ENCODE measurements at regions of chr5 and their contacts with region 1.

Region 1: DNA sequence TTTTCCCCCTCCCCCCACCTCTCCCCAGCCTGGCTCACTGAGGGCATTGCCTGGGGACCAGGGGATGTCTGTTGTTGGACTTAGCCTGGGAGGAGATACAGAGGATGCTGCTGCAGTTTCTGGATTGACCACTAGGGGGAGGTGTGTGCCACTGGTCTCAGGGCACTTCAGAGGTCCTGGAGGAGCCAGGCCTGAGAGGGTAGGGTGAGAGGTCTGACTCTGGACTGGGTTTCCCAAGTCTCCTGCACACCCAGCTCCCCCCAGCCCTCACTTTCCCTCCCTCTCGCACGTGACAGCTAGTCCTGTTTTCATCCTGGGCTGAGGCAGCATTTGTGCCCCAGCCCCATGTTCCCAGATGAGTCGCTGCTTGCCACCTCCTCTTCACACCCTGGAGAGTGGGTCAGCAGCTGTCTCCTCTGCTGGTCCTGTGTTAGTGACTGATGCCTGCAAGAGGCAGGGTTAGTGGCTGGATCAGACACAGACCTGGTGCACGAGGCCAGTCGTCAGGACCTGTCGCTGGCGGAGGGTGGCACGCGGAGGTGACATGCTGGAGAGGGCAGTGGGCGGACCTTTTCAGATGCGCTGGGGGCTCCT is 4.4 kb downstream of the IL3 start:
- H3K4me3 ChIP-seq: no peak overlapping the region
- H3K27ac ChIP-seq: no peak overlapping the region
- H3K4me1 ChIP-seq: no peaks in the 10 kb centered on the region
- CTCF ChIP-seq: peak; percentile 69; the same call in 1 of the 2 replicates

Region 2: GRCh38 chr5:131423056-131423455 is 641.8 kb before region 1 on chr5:
- CTCF ChIA-PET with region 1: interaction called, 29 read pairs
- POLR2A ChIA-PET with region 1: no interaction called
- H3K4me3 ChIP-seq: no peak overlapping the region
- H3K27ac ChIP-seq: no peak overlapping the region
- H3K4me1 ChIP-seq: no peaks in the 10 kb centered on the region
- CTCF ChIP-seq: peak; percentile 24; the same call in 1 of the 2 replicates

Region 3: GRCh38 chr5:131589510-131590348 is 475.1 kb before region 1 on chr5:
- CTCF ChIA-PET with region 1: interaction called, 42 read pairs
- POLR2A ChIA-PET with region 1: no interaction called
- H3K4me3 ChIP-seq: no peak overlapping the region
- H3K27ac ChIP-seq: no peak overlapping the region
- H3K4me1 ChIP-seq: no peaks in the 10 kb centered on the region
- CTCF ChIP-seq: peak; percentile 75

Region 4: DNA sequence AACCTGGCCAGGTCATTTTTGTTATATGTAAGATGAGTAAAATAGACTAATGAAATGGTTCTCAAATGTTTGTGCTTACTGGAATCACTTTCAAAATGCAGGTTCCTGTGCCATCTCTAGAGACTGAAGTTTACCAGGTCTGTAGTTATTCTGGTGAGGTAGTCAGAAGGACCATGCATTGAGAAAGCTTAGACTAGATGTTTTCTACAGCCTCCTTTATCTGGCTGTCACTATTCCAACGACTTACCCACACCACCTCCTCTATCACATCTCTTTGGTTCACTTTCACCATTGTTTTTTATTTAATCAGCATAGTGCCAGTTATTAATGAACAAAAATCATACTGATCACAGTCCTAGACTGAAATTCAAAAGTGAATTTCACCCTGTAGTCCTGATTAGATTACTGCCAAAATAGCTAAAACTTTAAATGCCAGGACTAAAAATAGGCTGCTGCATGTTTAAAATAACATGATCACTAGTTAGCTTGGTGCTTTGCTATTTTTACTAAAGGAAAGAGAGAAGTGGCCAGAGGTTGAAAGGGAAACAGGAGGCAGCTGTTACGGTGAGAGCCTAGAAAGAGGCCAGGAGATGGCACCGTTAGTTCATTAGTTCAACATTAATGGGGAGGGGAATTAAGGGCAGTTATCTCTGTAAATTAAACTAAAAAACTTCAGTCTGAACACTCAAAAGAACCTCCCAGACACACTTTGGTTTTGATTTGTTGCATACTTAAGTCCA is 254.2 kb before region 1 on chr5:
- CTCF ChIA-PET with region 1: interaction called, 13 read pairs
- POLR2A ChIA-PET with region 1: no interaction called
- H3K4me3 ChIP-seq: no peak overlapping the region
- H3K27ac ChIP-seq: no peak overlapping the region
- H3K4me1 ChIP-seq: no peaks in the 10 kb centered on the region
- CTCF ChIP-seq: no peak

Region 5: DNA sequence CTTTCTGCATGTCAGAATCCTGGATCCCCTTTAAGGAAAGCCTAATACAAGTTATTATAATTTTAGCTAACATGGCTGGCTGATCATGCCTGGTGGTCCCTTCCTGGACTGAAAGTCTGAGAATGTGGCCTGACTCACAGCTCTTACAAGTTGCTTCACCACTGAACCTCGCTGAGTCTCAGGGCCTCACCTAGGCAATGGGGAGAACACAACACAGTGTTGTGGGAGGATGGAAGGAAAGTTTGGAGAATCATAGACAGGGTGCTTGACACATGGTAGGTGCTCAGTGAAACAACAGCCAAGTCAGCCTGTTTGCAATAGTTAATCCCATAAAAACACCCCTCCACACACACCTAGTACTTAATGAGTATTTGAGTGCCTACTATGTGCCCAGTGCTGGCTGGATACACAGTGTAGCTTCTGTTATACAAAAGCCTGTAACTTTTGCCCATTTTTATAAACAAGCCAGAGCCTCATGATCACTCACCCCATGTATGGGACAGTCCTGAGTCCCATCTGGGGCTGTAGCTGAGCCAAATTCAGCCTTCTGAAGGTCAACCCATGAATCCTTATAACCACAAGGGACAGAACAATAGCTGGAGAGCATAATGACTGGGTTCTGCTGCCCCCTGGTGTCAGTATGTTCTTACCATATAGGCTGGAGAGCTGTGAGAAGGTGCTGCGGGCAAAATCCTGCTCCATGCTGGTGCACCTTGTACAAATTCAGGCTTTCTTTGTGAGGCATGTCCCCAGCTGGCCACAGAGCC is 57.3 kb before region 1 on chr5:
- CTCF ChIA-PET with region 1: interaction called, 16 read pairs
- POLR2A ChIA-PET with region 1: no interaction called
- H3K4me3 ChIP-seq: no peak overlapping the region
- H3K27ac ChIP-seq: no peak overlapping the region
- H3K4me1 ChIP-seq: no peaks in the 10 kb centered on the region; the same call in 1 of the 2 replicates
- CTCF ChIP-seq: peak; percentile 74

Region 6: GRCh38 chr5:132180134-132180745 is 115.4 kb after region 1 on chr5:
- CTCF ChIA-PET with region 1: interaction called, 10 read pairs
- POLR2A ChIA-PET with region 1: no interaction called
- H3K4me3 ChIP-seq: no peak overlapping the region
- H3K27ac ChIP-seq: no peak overlapping the region
- H3K4me1 ChIP-seq: no peaks in the 10 kb centered on the region
- CTCF ChIP-seq: peak; percentile 42; the same call in 1 of the 2 replicates

Region 7: DNA sequence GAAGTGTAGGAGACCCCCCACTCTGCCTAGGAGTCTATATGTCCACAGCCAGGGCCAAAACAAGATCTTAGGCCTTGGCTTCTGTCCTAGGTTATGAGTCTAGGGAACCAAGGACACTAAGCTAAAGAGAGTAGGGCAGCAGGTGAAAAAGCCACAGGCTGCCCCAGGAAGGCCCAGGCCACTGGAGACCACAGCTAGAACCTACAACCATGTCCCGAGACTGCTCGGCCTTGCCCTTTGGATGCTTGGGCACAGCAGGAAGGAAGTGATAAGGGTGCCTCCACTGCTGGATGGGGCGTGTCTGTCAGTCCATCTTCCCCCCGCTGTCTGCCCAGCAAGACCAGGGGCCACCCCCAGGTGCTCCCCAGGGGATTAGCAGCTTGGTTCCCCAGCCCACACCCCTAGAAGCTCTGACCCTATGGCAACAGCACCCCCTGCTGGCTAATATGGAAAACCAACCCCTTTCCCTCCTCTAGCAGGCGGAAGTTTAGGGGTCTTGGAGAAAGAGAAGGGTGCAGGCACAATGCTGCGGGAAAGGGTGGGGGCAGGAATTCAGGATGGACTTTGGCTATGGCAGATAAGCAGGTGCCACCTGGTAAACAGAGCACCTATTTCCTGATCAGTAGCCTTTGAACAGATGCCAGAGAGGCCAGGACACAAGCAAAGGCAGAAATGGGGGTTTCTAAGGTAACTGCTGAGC is 436.2 kb after region 1 on chr5:
- CTCF ChIA-PET with region 1: interaction called, 11 read pairs
- POLR2A ChIA-PET with region 1: no interaction called
- H3K4me3 ChIP-seq: no peak overlapping the region
- H3K27ac ChIP-seq: no peak overlapping the region
- H3K4me1 ChIP-seq: no peaks in the 10 kb centered on the region
- CTCF ChIP-seq: peak; percentile 69

Measured in HEK293 (cell line).